Spleen (tissue), 13 donors: ENCODE measurements at regions of chr6 and their contacts with region 1.

Region 1: DNA sequence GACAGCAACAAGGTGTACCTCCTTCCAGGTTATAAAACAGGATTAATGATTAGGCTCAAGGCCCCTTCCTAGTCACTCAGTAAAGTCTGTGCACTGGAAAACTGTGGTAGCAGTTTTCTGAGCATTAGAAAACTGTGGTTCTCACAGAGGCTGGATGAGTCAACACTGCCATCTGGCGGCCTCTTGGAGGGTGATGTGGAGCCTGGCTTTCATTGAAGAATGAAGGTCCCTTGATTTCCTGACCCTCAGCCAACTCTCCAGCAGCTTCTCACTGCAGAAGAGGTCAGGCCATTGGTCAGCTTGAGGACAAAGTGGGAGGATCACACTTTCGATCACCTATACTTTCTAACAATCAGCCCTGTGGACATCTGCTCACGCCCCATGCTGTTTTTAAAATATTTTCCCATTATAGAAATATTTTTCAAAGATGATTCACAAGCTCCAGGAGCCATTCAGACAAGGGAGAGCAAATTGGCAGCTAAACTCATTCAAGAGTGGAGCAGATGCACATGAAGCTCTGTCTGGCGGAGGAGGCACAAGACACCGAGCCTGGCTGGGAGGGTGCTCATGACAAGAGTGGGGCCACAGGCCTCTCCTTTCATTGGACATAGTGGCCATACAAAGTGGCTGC is 23.2 kb downstream of the PSMB1 start:
- DNase-seq: peak; percentile 88
- H3K4me3 ChIP-seq: no peak overlapping the region
- H3K27ac ChIP-seq: no peak overlapping the region
- H3K4me1 ChIP-seq: no peaks in the 10 kb centered on the region
- H3K27me3 ChIP-seq: no peaks in the 10 kb centered on the region
- CTCF ChIP-seq: peak; percentile 17 to 90 (median 79)
- POLR2A ChIP-seq: no peak

Region 2: GRCh38 chr6:168895102-168895812 is 1634.7 kb before region 1 on chr6:
- intact Hi-C with region 1: loop called (anchors 10 kb)
- DNase-seq: peak; percentile 91
- H3K4me3 ChIP-seq: peak overlapping the region in 2 of 8 donors; percentile 18 to 54
- H3K27ac ChIP-seq: peak overlapping the region in 1 of 8 donors; percentile 36
- H3K4me1 ChIP-seq: peaks cover 0 to 12% (median 10%) of the 10 kb centered on the region in 6 donors
- H3K27me3 ChIP-seq: peaks cover 0 to 6% (median 0%) of the 10 kb centered on the region in 7 donors
- CTCF ChIP-seq: peak; percentile 61 to 94 (median 86)
- POLR2A ChIP-seq: no peak

Region 3: GRCh38 chr6:169789982-169790927 is 739.7 kb before region 1 on chr6:
- intact Hi-C with region 1: loop called (anchors 10 kb)
- DNase-seq: peak; percentile 93
- H3K4me3 ChIP-seq: peak overlapping the region; percentile 24 to 68 (median 31)
- H3K27ac ChIP-seq: peak overlapping the region in 6 of 8 donors; percentile 14 to 51 (median 26)
- H3K4me1 ChIP-seq: peaks cover 9 to 23% (median 18%) of the 10 kb centered on the region in 6 donors
- H3K27me3 ChIP-seq: peaks cover 0 to 46% (median 5%) of the 10 kb centered on the region in 7 donors
- CTCF ChIP-seq: peak; percentile 90 to 98 (median 96)
- POLR2A ChIP-seq: no peak

Region 4: DNA sequence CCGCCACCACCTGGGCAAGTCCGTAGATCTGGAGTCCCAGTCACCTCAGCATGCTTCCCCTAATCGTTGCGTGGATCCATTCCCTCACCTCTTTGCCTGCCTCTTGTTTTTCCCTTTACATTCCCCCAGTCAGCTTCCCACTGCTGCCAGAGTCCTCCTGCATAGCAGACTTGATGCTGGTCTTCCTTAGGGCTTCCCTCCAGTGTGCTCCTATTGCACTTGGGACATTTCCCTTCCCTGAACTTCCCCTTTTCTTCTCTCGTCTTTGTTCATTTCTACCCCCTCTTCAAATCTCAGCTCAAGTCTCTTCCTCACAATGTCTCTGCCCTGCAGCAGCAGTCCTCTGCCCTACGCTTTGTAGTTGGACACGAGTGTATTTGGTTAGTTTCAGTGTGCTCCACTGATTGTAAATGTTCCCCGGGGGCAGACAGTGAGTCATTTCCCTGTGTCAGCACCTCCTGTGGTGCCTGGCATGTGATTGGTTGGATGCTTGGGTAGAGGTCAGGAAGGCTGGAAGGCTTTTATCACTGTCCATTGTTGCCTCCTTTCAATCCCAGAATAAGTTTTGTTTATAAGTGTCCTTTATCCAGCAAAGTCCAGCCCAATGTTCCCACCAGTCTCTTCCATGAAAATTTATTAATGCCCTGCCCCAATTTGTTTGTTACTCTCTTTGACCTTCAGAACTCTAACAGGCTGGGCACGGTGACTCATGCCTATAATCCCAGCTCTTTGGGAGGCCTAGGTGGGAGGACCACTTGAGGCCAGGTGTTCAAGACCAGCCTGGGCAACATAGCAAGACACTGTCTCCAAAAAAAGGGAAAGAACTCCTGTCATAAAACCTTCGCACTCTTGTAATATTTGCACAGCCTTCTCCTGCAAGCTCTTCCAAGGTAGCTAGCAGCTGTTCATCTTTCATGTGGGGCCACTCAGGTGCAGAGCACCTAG is 185.1 kb before region 1 on chr6:
- intact Hi-C with region 1: no loop called
- DNase-seq: no peak
- H3K4me3 ChIP-seq: no peak overlapping the region
- H3K27ac ChIP-seq: peak overlapping the region in 1 of 8 donors; percentile 36
- H3K4me1 ChIP-seq: peaks cover 0 to 12% (median 0%) of the 10 kb centered on the region in 6 donors
- H3K27me3 ChIP-seq: no peaks in the 10 kb centered on the region
- CTCF ChIP-seq: no peak
- POLR2A ChIP-seq: no peak